Caco-2 (cell line): ENCODE measurements at regions of chr17 and their contacts with region 1.

Region 1: DNA sequence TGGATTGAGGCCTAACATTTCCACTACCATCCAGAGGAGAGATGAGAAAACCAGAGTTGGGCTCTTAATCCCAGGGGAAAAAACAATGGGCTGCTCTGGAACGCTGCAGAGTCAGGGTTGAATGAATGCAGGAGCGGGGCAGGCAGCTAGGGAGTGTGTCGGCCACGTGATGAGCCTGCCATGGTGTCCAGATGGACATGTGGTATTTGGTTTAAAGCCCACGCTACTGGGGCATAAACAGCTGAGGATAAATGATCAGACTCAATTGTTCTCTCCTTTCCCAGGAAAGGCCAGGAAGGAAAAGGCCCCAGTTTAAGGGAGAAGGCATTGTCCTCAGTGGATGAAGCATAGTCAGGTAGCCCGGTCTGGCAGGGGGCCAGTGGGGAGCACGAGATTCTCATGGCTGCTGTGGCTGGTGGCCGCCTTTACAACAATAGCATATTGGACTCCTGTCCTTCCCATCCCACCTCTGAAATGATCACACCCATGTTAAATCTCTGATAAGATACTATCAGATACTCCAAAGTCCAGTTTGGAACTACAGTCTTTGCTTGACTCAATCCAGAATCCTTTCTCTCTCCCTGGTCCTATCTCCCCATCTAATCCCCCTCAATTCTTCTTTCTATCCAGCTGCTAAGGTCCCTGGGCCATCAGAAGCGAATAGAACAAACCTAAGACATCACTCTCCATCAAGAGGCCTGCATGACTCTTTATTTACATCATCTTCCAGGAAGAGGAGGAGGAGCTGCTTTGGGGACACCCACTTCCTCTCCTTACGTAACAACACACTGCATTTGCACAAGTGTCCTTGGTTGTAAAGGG is 20.4 kb downstream of the CA4 start:
- DNase-seq: no peak
- H3K4me3 ChIP-seq: no peak overlapping the region
- H3K4me3 Mint-ChIP-seq: no peak overlapping the region
- H3K27ac Mint-ChIP-seq: peak overlapping the region; percentile 11
- H3K4me1 ChIP-seq: peaks cover 48% of the 10 kb centered on the region
- H3K4me1 Mint-ChIP-seq: peaks cover 45% of the 10 kb centered on the region
- H3K27me3 ChIP-seq: no peaks in the 10 kb centered on the region
- H3K27me3 Mint-ChIP-seq: no peaks in the 10 kb centered on the region
- CTCF ChIP-seq: no peak

Region 2: GRCh38 chr17:60134370-60134769 is 35.8 kb before region 1 on chr17:
- CTCF ChIA-PET with region 1: no interaction called
- POLR2A ChIA-PET with region 1: no interaction called
- intact Hi-C with region 1: no loop called
- DNase-seq: peak in 1 of 2 experiments; percentile 31
- H3K4me3 ChIP-seq: peak overlapping the region; percentile 95
- H3K4me3 Mint-ChIP-seq: peak overlapping the region; percentile 94
- H3K27ac Mint-ChIP-seq: peak overlapping the region; percentile 61
- H3K4me1 ChIP-seq: no peaks in the 10 kb centered on the region
- H3K4me1 Mint-ChIP-seq: peaks cover 8% of the 10 kb centered on the region
- H3K27me3 ChIP-seq: no peaks in the 10 kb centered on the region
- H3K27me3 Mint-ChIP-seq: no peaks in the 10 kb centered on the region
- CTCF ChIP-seq: no peak

Region 3: DNA sequence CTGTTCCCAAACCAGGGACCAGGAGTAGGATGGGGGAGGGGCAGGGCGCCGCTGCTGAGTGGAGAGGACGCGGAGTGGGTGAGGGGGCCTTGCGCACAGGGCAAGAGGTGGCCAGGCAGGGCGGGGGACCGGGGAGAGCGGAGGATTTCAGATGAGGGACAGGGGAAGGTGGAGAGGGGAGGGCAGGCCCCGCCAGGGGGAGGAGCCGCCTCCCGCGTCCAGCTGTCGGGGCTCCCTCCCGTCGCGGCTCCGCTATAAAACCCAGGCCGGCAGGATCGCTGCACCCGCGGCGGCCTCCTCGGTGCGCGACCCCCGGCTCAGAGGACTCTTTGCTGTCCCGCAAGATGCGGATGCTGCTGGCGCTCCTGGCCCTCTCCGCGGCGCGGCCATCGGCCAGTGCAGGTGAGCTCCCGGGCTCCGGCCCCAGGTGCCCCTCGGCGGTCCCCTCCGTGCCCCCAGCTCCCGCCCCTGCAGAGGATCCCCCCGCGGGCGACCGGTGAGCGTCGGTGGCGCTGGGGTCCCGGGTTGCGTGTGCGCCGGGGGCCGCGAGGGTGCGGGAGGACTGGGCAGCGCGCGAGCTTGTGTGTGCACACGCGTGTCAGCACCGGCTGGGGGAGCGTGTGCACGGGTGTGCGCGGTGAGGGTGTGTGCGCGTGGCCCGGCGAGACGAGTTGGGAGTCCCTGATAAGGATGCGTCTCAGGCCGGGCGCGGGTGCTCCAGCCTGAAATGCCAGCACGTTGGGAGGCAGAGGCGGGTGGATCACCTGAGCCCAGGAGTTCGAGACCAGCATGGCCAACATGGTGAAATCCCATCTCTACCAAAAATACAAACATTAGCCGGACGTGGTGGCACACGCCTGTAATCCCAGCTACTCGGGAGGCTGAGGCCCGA is 20.2 kb before region 1 on chr17 and contains the start of gene CA4:
- CTCF ChIA-PET with region 1: interaction called, 4 read pairs
- POLR2A ChIA-PET with region 1: no interaction called
- intact Hi-C with region 1: loop called (anchors 2 kb)
- DNase-seq: no peak
- H3K4me3 ChIP-seq: peak within 1 kb of the TSS; percentile 34
- H3K4me3 Mint-ChIP-seq: peak within 1 kb of the TSS; percentile 51
- H3K27ac Mint-ChIP-seq: no peak within 1 kb of the TSS
- H3K4me1 ChIP-seq: peaks cover 49% of the 10 kb centered on the region
- H3K4me1 Mint-ChIP-seq: peaks cover 37% of the 10 kb centered on the region
- H3K27me3 ChIP-seq: no peaks in the 10 kb centered on the region
- H3K27me3 Mint-ChIP-seq: peaks cover 3% of the 10 kb centered on the region
- CTCF ChIP-seq: no peak
- total RNA-seq, gene CA4: not detected in 2 replicates

Region 4: DNA sequence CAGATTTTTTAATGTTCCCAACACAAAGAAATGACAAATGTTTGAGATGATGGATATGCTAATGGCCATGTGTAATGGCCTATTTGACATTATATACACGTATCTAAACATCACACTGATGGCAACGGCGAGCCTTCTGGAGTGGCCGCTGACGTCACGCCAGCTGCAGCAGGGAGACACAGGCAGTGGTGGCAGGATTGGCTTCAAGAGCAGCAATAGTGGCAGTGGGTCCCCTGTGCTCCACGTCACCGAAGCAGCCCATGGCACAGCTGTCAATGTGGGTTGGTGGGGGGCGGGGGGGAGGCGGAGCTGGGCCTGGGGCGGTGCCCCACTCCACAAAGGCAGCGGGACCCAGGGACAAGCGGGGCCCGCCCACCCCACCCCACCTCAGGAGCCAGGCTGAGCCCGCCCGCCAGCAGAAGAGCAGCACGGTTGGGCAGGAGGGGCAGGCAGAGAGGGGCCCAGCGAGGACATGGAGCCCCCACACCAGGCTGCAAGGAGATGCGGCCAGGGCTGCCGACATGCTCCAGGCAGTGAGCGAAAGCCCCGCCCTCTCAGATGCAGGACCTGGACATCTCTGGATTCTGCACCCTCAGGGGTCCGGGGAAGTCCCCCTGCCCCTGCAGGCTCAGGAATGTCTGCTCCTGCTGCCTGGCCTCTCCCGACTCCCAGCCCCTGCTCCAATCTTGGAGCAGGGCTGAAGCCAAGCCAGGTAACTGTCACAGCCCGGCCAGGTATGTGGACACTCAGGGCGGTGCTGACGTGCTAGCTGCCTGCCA is 157.2 kb after region 1 on chr17:
- CTCF ChIA-PET with region 1: no interaction called
- POLR2A ChIA-PET with region 1: no interaction called
- intact Hi-C with region 1: no loop called
- DNase-seq: no peak
- H3K4me3 ChIP-seq: no peak overlapping the region
- H3K4me3 Mint-ChIP-seq: no peak overlapping the region
- H3K27ac Mint-ChIP-seq: peak overlapping the region; percentile 60
- H3K4me1 ChIP-seq: peaks cover 11% of the 10 kb centered on the region; the same call in 1 of the 2 replicates
- H3K4me1 Mint-ChIP-seq: no peaks in the 10 kb centered on the region
- H3K27me3 ChIP-seq: no peaks in the 10 kb centered on the region
- H3K27me3 Mint-ChIP-seq: no peaks in the 10 kb centered on the region
- CTCF ChIP-seq: no peak